ENCODE measurements at regions of chr3 and their contacts with region 1.

Region 1: GRCh38 chr3:123804676-123805075 is 79.5 kb downstream of the MYLK start:
- DNase-seq: no peak
- ATAC-seq: no peak

Region 2: DNA sequence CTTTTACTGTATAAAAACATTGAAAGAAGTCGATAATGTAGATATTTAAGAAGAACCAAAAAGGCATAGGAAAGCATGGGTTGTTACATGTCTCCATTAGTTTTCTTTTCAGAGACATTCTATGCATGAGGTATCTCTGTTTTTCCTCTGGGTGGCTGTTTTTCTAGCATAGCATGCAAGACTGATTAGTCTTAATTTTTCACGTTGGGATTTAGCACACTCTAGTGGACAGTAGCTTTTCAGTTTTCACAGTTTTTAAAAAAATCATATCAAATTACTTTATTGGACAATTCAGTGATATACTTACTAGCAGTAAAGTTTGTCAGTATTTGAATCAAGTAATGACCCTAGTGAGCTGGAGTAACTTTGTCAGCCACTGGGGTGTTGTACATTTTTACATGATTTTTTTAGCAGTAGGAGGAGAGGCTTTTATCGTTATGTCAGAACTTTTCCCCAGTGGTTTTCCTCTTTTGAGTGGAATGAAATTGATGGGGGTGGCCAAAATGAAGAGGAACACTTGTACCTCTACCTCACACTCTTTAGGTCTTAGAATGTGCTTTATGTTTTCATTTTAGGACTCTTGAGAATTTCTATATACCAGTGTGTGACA is 545.8 kb before region 1 on chr3:
- intact Hi-C with region 1: no loop called
- DNase-seq: no peak
- ATAC-seq: peak; percentile 68

Region 3: DNA sequence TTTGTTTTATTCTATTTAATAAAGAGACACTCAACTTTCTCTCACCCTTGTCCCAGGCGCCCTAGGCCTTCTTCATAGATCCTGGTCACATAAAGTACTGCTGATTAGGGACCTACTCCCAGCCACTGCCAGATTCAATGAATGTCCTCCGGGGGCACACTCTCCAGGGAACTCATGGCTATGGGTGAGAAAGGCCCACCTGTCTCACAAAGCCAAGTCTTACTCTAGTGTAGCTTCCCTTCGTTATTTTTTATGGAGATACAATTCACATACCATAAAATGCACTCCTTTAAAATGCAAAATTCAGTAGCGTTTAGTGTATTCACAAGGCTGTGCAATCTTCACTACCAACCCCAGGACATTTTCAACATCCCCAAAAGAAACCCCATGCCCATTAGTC is 443.6 kb before region 1 on chr3:
- intact Hi-C with region 1: no loop called
- DNase-seq: no peak
- ATAC-seq: no peak

Region 4: DNA sequence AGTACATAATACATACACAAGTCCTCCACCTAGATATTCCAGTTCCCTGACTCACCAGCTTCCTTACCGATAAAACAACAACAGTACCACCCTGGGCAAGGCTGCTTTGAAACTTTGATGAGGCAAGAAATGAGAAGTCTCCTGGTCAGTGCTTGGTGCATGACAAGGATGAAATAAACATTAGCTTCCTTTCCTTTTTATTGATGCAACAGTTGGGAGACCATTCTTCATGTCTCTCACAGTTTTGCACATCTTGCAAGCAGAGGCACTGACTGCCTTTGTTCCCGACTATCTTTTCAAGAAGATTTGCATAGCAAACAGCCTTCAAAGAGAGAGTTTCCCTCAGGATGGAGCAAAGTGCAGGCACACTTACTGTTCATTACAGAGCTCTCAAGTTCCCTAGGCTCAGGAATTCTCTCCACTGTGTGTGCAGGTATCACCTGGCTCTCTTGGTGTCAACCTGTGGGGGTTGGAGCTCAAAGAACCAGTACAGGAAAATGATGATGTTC is 14.3 kb after region 1 on chr3:
- intact Hi-C with region 1: loop called (anchors 1 kb)
- DNase-seq: no peak
- ATAC-seq: no peak